ENCODE measurements at regions of chr20 and their contacts with region 1.

Region 1: DNA sequence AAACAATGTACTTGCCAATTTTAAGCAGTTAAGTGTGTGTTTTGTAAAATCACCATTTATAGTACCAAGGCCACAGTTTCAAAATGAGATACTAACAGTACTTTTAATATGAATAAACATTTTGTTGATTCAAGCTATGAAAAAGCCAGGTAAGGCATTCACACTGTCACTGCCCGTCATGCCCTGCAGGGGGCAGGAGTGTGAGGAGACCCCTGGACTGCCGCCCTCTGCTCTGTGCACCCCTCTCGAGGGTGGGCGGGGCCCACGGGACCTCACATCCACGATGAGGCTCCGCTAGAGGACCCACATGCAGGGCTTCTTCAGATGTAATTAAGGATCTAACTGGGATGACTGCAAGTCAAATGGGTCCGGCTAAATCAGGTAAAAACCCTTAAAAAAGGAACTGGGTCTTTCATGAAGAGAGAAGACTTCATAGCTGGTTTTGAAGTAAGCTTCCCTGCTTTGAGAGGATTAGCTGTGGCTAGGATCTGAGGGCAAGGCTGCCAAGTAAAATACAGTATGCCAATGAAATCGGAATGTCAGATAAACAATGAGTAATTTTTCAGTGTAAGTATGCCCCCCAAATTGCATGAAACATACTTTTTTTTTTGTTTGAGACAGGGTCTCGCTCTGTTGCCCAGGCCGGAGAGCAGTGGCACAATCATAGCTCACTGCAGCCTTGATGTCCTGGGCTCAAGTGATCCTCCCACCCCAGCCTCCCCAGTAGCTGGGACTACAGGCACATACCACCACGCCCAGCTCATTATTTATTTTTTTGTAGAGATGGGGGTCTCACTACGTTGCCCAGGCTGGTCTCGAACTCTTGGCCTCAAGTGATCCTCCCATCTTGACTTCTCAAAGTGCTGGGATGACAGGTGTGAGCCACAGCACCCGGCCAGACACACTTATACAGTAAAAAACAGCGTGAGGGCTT is 18.7 kb downstream of the DIDO1 start:
- DNase-seq: no peak
- ATAC-seq: peak in 1 of 2 experiments; percentile 74; a peak in 3 of 6 replicates
- H3K4me3 ChIP-seq: no peak overlapping the region
- H3K27ac ChIP-seq: no peak overlapping the region
- H3K4me1 ChIP-seq: no peaks in the 10 kb centered on the region
- CTCF ChIP-seq: peak; percentile 43
- EP300 ChIP-seq: no peak
- POLR2A ChIP-seq: no peak
- RAD21 ChIP-seq: no peak

Region 2: DNA sequence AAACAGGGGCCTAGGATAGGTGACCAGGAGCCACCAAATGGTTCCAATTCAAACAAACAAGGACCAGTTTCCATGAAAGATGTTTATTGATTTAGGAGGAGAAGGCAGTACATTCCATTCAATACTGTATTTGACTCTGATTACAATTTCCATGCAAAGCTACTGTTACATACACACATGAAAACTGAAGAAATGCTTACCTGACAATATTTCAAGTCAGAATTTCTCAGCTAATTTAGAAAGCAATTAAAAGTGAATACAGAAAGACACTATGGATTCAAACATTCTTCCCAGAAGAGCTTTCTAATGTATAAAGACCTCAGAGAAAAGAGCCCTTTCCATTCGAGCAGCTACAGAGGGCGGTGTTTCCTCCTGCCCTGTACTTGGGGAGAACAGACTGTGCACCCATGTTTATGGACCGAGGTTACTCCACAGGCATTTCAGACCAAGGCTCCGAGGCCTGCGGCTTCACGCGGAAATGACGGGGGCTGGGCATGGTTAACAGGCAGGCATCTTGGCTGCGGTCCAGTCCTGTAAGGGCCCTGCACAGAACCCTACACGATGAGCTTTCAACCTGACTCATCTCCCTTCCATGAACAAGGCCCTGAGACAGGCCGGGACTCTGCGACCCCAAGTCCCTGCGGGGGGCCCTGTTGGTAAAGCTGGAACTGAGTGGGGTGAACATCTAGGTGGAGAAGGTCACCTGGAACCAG is 20.3 kb before region 1 on chr20:
- CTCF ChIA-PET with region 1: interaction called, 123 read pairs
- POLR2A ChIA-PET with region 1: interaction called, 3 read pairs
- DNase-seq: no peak
- ATAC-seq: peak in 1 of 2 experiments; percentile 24; a peak in 2 of 6 replicates
- H3K4me3 ChIP-seq: no peak overlapping the region
- H3K27ac ChIP-seq: no peak overlapping the region
- H3K4me1 ChIP-seq: no peaks in the 10 kb centered on the region
- CTCF ChIP-seq: no peak
- EP300 ChIP-seq: no peak
- POLR2A ChIP-seq: no peak
- RAD21 ChIP-seq: no peak

Region 3: DNA sequence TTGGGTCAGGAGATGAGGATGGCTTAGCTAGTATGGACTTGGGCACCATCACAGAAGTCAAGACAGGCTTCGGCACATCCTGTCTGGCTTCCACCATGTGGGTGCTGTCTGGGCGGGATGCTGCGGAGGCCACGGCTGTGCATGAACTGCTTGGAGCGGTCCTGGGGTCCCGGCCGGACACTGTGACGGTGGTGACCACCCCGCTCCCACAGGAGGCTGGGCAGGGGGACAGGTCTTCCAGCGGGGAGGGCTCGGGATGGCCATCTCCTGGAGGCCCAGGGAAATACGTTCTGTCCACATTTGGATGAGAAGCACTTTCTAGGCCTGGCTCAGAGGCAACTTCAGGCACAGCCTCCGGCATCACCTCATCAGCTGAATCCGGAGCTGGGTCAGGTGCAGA is 14.0 kb before region 1 on chr20:
- CTCF ChIA-PET with region 1: interaction called, 368 read pairs
- POLR2A ChIA-PET with region 1: no interaction called
- DNase-seq: peak in 1 of 2 experiments; percentile 31
- ATAC-seq: peak; percentile 45 to 62; a peak in 4 of 6 replicates
- H3K4me3 ChIP-seq: no peak overlapping the region
- H3K27ac ChIP-seq: no peak overlapping the region
- H3K4me1 ChIP-seq: no peaks in the 10 kb centered on the region
- CTCF ChIP-seq: no peak
- EP300 ChIP-seq: no peak
- POLR2A ChIP-seq: no peak
- RAD21 ChIP-seq: no peak

Region 4: DNA sequence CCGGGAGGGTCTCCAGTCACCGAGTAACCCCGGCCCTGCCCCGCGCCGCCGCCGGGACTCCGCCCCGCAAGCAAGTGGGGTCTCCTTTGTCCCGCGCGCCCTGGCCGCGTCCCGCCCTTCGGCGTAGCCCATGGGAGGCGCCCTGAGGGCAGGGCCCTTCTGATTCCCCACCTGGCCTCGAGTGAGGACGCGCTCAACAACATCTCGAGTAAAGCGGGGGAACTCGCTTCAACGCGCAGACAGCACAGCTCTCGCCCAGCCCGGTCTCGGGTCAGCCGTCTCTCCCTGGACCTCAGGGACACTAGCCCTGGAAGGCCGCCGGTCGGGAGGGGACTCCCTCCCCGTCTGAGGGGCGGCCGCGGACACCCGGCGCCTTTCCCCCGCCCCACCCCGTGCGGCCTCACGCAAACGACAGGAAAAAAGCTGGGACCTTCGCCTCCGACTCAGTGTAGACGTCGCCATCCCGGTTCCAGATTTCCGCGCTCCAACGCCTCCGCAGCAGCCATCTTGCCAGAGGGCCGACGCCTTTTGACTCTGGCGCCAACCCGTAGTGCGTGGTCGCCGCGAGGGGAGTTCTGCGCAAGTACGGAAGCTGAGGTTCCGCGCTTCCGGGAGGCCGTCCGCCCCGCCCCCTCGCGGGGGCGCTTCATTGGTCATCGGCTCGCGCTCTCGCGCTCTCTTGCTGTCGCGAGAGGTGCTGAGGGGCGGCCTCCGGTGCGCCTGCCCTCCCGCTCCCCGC is 29.9 kb after region 1 on chr20:
- CTCF ChIA-PET with region 1: interaction called, 14 read pairs
- POLR2A ChIA-PET with region 1: no interaction called
- DNase-seq: peak; percentile 83 to 96
- ATAC-seq: peak; percentile 93
- H3K4me3 ChIP-seq: peak overlapping the region; percentile 68
- H3K27ac ChIP-seq: peak overlapping the region; percentile 91 to 94
- H3K4me1 ChIP-seq: peaks cover 28% of the 10 kb centered on the region
- CTCF ChIP-seq: no peak
- EP300 ChIP-seq: no peak
- POLR2A ChIP-seq: peak; percentile 75
- RAD21 ChIP-seq: no peak

Region 5: DNA sequence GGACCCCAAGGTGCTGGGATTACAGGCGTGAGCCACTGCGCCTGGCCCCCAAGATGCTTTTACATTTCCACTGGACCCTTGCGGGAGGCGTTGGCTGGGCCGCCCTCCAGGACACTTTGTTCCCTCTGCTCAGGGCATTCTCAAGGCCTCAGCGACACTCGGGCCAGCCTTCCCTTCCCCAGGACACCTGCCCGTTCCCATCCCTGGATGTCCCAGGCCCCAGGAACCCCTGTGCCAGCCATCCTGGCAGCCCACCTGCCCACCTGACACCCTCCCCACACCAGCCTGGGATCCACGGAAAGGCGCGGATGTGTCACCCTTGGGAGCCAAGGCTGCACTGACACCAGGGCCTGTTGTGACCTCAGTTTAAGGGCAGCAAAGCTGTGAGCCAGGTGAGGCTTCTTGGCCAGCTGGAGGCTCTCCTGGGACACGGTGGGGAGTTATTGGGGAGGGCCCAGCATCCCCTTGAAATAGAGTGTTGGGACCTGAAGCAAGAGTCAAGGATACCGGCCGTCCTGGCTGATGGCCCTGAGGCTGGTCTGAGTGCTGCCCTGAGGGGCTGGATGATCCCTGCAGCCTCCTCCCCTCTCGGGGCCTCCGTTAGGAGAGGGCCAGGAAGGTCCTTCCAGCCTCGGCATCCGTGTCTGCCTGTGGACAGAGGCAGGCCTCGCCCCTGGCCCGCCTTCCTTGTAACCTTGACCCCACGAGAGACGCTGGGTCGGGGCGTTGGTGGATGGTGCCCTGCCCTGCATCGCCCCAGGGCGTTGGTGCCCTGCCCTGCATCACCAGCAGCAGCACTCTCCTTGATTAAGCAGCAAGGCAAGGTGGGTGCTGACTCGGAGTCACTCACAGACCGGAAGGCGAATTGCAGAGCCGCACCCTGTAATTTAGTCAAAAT is 183.3 kb after region 1 on chr20:
- CTCF ChIA-PET with region 1: no interaction called
- POLR2A ChIA-PET with region 1: no interaction called
- DNase-seq: no peak
- ATAC-seq: no peak
- H3K4me3 ChIP-seq: no peak overlapping the region
- H3K27ac ChIP-seq: no peak overlapping the region
- H3K4me1 ChIP-seq: no peaks in the 10 kb centered on the region
- CTCF ChIP-seq: no peak
- EP300 ChIP-seq: no peak
- POLR2A ChIP-seq: no peak
- RAD21 ChIP-seq: no peak